ENCODE measurements at regions of chr17 and their contacts with region 1.

Region 1: DNA sequence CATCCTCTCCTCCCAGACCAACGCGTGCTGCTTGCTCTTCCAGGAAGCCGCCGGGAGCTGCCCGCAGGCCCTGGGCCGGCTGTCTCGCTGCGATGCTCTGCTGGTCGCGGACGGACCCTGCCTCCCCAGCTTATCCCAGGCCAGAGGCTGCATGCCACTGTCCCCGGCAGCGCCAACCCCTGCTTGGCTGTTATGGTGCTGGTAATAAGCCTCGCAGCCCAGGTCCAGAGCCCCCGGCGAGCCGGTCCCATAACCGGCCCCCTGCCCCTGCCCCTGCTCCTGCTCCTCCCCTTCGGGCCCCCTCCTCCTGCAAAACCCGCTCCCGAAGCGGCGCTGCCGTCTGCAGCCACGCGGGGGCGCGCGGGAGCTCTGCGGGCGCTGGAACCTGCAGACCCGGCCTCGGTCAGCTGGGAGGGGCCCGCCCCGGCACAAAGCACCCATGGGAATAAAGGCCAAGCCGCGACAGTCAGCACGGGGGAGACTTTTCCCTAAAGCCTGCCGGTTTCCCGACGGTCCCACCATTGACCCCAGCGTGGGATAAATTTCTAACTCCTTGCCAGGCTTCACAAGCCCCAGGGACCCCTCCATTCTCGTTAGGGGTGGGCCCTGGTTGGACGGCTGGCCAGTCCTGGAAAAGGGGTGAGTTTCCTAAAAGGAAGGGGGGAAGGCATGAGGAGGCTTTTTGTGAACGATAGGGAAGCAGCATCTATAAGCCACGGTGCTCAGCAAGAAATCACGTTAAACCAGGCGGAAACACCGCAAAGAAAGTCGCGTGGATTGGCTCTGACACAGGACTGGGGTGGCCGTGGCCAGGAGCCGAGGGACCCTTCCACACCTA is 11.2 kb downstream of the ENPP7 start:
- DNase-seq: no peak
- H3K4me3 ChIP-seq: no peak overlapping the region
- H3K27ac ChIP-seq: no peak overlapping the region
- H3K27me3 ChIP-seq: peaks cover 53% of the 10 kb centered on the region
- CTCF ChIP-seq: peak; percentile 81

Region 2: GRCh38 chr17:79715098-79715942 is 26.6 kb before region 1 on chr17:
- CTCF ChIA-PET with region 1: no interaction called
- POLR2A ChIA-PET with region 1: no interaction called
- DNase-seq: no peak
- H3K4me3 ChIP-seq: no peak overlapping the region
- H3K27ac ChIP-seq: no peak overlapping the region
- H3K27me3 ChIP-seq: peaks cover 20% of the 10 kb centered on the region
- CTCF ChIP-seq: no peak

Region 3: GRCh38 chr17:79728226-79728907 is 13.6 kb before region 1 on chr17:
- CTCF ChIA-PET with region 1: interaction called, 10 read pairs
- POLR2A ChIA-PET with region 1: no interaction called
- DNase-seq: peak; percentile 79
- H3K4me3 ChIP-seq: peak overlapping the region; percentile 46
- H3K27ac ChIP-seq: no peak overlapping the region
- H3K27me3 ChIP-seq: no peaks in the 10 kb centered on the region
- CTCF ChIP-seq: no peak

Region 4: GRCh38 chr17:79796763-79797491 is 55.0 kb after region 1 on chr17 and contains the start of gene CBX8:
- CTCF ChIA-PET with region 1: interaction called, 11 read pairs
- POLR2A ChIA-PET with region 1: no interaction called
- DNase-seq: peak; percentile 99
- H3K4me3 ChIP-seq: peak within 1 kb of the TSS; percentile 85
- H3K27ac ChIP-seq: peak within 1 kb of the TSS; percentile 83
- H3K27me3 ChIP-seq: peaks cover 44% of the 10 kb centered on the region
- CTCF ChIP-seq: no peak
- polyA plus RNA-seq, gene CBX8: 0.37 and 1.5 TPM in 2 replicates

Region 5: DNA sequence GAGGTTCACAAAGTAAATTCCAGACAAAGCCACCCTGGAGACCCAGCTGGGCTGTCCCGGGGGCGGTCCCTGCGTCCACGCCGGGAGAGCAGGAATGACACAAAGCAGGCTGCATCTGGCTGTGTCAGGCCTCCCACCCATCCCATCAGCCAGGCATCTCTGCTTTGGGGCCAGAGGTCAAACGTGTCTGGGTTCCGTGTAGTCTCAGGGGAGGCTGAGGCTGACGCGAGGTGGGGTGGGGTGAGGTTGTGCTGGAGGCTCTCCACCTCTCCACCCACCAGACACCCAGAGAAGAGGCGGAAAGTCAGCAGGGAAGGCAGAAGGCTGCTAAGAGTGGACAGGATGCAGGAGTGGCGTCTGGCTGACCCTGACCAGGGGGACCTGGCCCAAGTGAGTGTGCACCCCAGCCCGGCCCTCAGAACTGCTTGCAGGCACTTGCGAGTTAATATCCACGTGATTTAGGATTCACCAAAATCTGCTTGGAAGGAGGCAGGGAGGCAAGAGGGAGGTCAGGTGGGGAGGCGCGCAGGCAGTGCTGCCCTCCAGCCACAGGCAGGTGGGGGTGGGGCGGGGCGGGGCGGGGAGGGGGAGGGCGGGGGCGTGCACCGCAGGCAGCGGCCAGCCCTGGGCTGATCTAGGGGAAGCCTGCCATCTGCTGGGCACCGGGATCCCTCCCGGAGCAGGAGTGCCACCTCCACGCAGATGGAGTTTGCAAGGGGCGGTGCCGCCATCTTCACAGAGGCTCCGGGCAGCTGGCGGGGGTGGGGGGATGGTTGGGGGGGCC is 249.4 kb after region 1 on chr17:
- CTCF ChIA-PET with region 1: interaction called, 10 read pairs
- POLR2A ChIA-PET with region 1: interaction called, 4 read pairs
- DNase-seq: peak; percentile 43
- H3K4me3 ChIP-seq: no peak overlapping the region
- H3K27ac ChIP-seq: no peak overlapping the region
- H3K27me3 ChIP-seq: no peaks in the 10 kb centered on the region
- CTCF ChIP-seq: peak; percentile 59

Measured in AG04450 (cell line).